Activated CD8-positive, alpha-beta T cell treated with anti-CD3 and anti-CD28 coated beads, Interleukin-2, amount 10 ng/mL, durations not matched to agents 7 days and 5 days (primary cell): ENCODE measurements at regions of chr9 and their contacts with region 1.

Region 1: GRCh38 chr9:126704873-126705766 is 91.4 kb downstream of the LMX1B start:
- DNase-seq: peak; percentile 89
- ATAC-seq: peak; percentile 71
- H3K4me3 Mint-ChIP-seq: peak overlapping the region; percentile 26
- H3K27ac Mint-ChIP-seq: peak overlapping the region; percentile 4
- H3K4me1 Mint-ChIP-seq: peaks cover 19% of the 10 kb centered on the region
- H3K27me3 Mint-ChIP-seq: peaks cover 16% of the 10 kb centered on the region

Region 2: GRCh38 chr9:126690431-126691350 is 14.4 kb before region 1 on chr9:
- CTCF ChIA-PET with region 1: interaction called, 54 read pairs
- POLR2A ChIA-PET with region 1: no interaction called
- DNase-seq: peak; percentile 75
- ATAC-seq: peak; percentile 80
- H3K4me3 Mint-ChIP-seq: no peak overlapping the region
- H3K27ac Mint-ChIP-seq: no peak overlapping the region
- H3K4me1 Mint-ChIP-seq: no peaks in the 10 kb centered on the region
- H3K27me3 Mint-ChIP-seq: peaks cover 12% of the 10 kb centered on the region

Region 3: GRCh38 chr9:126733005-126733404 is 27.9 kb after region 1 on chr9:
- CTCF ChIA-PET with region 1: interaction called, 38 read pairs
- POLR2A ChIA-PET with region 1: interaction called, 3 read pairs
- DNase-seq: no peak
- ATAC-seq: no peak
- H3K4me3 Mint-ChIP-seq: no peak overlapping the region
- H3K27ac Mint-ChIP-seq: no peak overlapping the region
- H3K4me1 Mint-ChIP-seq: no peaks in the 10 kb centered on the region
- H3K27me3 Mint-ChIP-seq: peaks cover 8% of the 10 kb centered on the region

Region 4: GRCh38 chr9:126752376-126752775 is 47.3 kb after region 1 on chr9:
- CTCF ChIA-PET with region 1: interaction called, 55 read pairs
- POLR2A ChIA-PET with region 1: interaction called, 5 read pairs
- DNase-seq: no peak
- ATAC-seq: no peak
- H3K4me3 Mint-ChIP-seq: no peak overlapping the region
- H3K27ac Mint-ChIP-seq: no peak overlapping the region
- H3K4me1 Mint-ChIP-seq: peaks cover 21% of the 10 kb centered on the region
- H3K27me3 Mint-ChIP-seq: peaks cover 4% of the 10 kb centered on the region

Region 5: DNA sequence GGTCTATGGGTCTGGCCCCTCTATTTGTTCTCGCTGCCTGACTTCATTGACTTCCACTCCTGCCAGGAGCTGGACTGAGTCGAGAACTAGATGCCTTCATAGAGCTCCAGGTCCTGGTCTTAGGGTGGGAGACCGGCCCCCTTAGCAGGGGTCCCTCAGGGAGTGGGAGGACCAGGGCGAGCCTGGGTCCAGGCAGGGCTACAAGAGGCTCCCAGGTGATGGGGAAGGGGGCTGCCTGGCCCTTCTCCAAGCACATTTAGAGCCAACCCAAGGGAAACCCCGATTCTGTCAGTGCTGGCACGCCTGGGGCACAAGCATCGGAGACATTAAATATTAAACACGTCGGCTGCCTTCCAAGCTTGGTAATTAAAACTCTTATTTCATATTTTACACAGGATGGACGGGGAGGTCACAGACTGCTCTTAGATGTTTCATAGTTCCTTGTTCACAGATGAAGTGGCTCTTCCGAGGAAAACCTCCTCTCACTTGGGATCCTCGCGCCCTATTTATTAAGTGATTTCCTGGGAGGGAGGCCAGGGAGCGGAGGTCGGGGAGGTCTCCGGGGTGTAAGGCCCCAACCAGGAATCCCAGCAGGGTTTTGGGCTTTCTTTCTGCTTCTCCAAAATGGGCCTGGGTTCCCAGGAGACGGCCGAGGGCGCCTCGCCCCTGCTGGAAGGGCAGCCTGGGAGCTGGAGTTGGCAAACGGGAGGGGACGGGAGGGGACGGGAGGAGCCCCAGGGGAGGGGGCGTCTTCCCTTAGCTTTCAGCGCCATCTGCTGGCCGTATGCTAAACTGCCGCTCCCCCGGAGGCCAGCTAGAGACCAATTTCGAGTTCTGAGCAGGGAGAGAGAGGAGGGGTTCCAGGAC is 76.3 kb after region 1 on chr9:
- CTCF ChIA-PET with region 1: interaction called, 704 read pairs
- POLR2A ChIA-PET with region 1: interaction called, 8 read pairs
- DNase-seq: peak; percentile 86
- ATAC-seq: peak; percentile 89
- H3K4me3 Mint-ChIP-seq: no peak overlapping the region
- H3K27ac Mint-ChIP-seq: no peak overlapping the region
- H3K4me1 Mint-ChIP-seq: peaks cover 4% of the 10 kb centered on the region
- H3K27me3 Mint-ChIP-seq: peaks cover 5% of the 10 kb centered on the region

Region 6: GRCh38 chr9:126804696-126805545 is 99.8 kb after region 1 on chr9 and contains the start of gene ZBTB43:
- CTCF ChIA-PET with region 1: interaction called, 18 read pairs
- POLR2A ChIA-PET with region 1: interaction called, 14 read pairs
- DNase-seq: peak; percentile 99
- ATAC-seq: peak; percentile 87
- H3K4me3 Mint-ChIP-seq: peak within 1 kb of the TSS; percentile 83
- H3K27ac Mint-ChIP-seq: peak within 1 kb of the TSS; percentile 96
- H3K4me1 Mint-ChIP-seq: peaks cover 42% of the 10 kb centered on the region
- H3K27me3 Mint-ChIP-seq: no peaks in the 10 kb centered on the region
- total RNA-seq, gene ZBTB43: 13.6 to 19.1 TPM

Region 7: DNA sequence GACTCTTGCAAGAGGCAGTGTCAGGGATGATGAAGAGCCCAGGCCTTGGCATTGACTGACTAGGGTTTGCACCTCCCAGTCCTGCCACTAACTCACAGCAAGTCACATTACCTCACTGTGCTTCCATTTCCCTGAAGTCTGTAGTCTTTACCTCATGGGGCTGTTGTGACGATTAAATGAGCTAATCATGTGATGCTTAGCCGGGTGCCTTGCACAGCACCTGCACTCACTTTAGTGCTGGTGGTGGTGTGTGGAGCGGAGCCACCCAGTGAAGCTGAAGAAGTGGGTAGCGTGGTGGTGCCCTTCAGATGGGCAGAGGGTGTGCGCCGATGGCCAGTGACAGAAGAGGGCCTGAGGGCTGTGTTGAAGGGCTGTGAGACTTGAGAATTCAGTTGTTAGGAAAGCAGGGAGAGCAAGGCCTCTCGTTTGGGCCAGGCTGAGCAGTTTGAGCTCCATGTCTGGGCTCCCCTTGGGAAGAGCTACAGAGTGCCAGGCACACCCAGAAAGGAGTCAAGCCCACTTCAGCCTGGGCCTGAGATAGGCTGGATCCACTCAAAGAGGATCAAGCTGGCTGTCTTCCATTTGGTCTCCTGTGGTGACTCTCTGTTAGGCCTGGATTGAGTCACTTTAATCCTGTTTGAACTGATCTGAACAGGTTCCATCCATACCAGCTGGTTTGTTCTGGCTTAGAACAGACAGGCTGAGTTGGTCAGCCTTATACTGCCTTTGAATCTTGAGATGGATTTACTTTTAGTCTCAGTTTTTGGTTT is 252.0 kb after region 1 on chr9:
- CTCF ChIA-PET with region 1: no interaction called
- POLR2A ChIA-PET with region 1: no interaction called
- DNase-seq: no peak
- ATAC-seq: no peak
- H3K4me3 Mint-ChIP-seq: no peak overlapping the region
- H3K27ac Mint-ChIP-seq: no peak overlapping the region
- H3K4me1 Mint-ChIP-seq: no peaks in the 10 kb centered on the region
- H3K27me3 Mint-ChIP-seq: peaks cover 25% of the 10 kb centered on the region